Heart right ventricle (tissue), 16 donors: ENCODE measurements at regions of chr18 and their contacts with region 1.

Region 1: GRCh38 chr18:9206421-9206820 is 69.8 kb downstream of the ANKRD12 start:
- DNase-seq: no peak
- ATAC-seq: no peak
- H3K4me3 ChIP-seq: no peak overlapping the region
- H3K27ac ChIP-seq: no peak overlapping the region
- H3K4me1 ChIP-seq: peaks cover 0 to 25% (median 0%) of the 10 kb centered on the region in 9 donors
- H3K27me3 ChIP-seq: no peaks in the 10 kb centered on the region
- CTCF ChIP-seq: no peak

Region 2: GRCh38 chr18:9173770-9174233 is 32.6 kb before region 1 on chr18:
- intact Hi-C with region 1: loop called in 1 of 10 experiments (anchors 2 kb)
- DNase-seq: no peak
- ATAC-seq: peak in 3 of 8 donors; percentile 6 to 29 (median 19)
- H3K4me3 ChIP-seq: no peak overlapping the region
- H3K27ac ChIP-seq: peak overlapping the region in 1 of 10 donors; percentile 16
- H3K4me1 ChIP-seq: peaks cover 2 to 74% (median 50%) of the 10 kb centered on the region in 9 donors
- H3K27me3 ChIP-seq: no peaks in the 10 kb centered on the region
- CTCF ChIP-seq: no peak

Region 3: DNA sequence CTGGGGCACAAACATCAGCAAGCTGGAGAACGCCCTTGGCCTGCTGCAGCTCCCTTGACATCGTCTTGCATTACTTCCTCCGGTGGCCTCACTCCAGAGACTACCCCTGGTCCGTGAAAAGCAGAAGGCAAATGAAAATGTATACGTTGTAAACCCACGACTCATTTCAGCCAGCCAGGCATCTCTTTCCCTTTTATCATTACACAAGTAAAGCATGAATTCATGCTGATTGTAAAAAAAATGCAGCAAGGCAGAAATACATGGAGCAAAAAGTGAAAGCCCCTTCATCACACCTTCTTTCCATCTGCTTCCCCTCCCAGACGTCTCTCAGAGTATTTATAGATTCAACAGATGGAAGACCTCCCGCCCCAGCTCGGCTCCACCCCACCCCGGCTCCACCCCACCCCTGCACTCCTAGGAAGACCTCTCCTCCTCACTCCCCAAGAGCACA is 227.3 kb after region 1 on chr18:
- intact Hi-C with region 1: no loop called
- DNase-seq: no peak
- ATAC-seq: peak in 4 of 8 donors; percentile 18 to 52 (median 38)
- H3K4me3 ChIP-seq: peak overlapping the region in 1 of 10 donors; percentile 10
- H3K27ac ChIP-seq: no peak overlapping the region
- H3K4me1 ChIP-seq: peaks cover 0 to 24% (median 4%) of the 10 kb centered on the region in 9 donors
- H3K27me3 ChIP-seq: no peaks in the 10 kb centered on the region
- CTCF ChIP-seq: no peak